GM10248 (cell line): ENCODE measurements at regions of chr1 and their contacts with region 1.

Region 1: DNA sequence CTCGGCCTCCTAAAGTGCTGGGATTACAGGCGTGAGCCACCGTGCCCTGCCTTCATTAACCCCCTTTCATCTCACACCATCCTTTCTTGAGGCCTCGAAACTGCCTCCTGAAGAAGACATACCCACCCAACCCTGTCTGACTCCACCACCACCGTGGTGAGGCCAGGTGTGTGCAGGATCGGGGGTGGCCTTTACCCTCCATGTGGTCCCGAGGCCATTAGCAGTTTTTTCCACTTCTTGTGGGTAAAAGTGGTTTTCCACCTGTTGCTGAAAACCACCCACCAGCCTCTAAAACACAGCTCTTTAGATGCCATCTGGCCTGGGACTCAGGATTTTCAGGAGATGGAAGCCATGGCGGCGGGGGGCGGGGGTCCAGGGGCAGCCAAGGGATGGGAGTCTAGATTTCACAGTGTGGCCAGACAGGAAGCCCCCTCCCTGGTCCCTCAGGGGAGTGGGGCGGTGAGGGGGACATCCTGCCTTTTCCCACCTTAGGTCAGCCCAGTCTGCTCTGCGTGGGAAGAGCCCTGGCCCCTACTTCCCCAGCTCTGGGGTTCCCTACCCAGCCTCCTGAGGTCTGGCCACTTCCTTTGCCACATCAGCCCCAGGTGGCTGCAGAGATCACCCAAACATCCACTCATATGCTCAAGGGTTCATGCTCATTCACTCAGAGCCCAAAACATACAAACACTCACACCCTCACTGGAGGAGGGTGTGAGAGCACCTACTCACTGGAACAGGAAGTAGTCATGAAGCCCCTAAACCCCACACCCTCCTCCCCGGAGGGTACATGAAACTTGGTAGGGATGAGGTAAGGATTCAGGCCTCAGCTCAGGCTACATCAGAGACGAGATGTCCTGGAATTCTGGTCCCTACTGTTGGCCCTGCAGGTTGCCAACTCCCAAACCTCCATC is 2.3 kb downstream of the FGR start:
- DNase-seq: peak; percentile 67
- CTCF ChIP-seq: no peak

Region 2: GRCh38 chr1:27616441-27616840 is 16.2 kb before region 1 on chr1:
- CTCF ChIA-PET with region 1: interaction called, 11 read pairs
- POLR2A ChIA-PET with region 1: interaction called, 5 read pairs
- DNase-seq: no peak
- CTCF ChIP-seq: peak; percentile 23

Region 3: DNA sequence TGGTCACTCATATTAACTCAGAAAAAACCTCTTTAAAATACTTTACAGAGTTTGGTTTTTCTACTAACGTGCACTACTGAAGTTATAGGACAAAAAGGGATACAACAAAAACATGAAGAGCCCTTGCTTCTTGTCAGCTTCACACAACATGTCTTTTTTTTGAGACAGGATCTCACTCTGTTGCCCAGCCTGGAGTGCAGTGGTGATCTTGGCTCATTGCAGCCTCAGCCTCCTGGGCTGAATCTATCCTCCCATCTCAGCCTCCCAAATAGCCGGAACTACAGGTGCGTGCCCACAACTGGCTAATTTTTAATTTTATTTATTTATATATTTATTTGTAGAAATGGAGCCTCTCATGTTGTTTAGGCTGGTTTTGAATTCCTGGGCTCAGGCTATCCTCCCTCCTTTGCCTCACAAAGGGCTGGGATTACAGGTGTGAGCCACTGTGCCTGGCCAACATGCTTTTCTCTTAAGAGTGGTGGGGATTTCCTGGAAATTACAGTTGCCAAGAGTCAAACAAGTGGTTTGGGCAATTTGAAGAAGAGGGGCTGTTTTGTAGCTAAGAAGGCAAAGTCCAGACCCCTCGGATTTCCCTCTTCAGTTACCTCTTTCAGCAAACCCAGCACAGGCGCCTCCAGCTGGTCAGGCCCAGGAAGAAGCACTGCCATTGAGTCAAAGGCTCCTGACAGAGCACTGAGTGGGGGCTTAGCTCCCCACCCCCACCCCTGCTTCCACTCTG is 295.7 kb after region 1 on chr1:
- CTCF ChIA-PET with region 1: no interaction called
- POLR2A ChIA-PET with region 1: no interaction called
- DNase-seq: no peak
- CTCF ChIP-seq: no peak